AG04450 (cell line): ENCODE measurements at regions of chr12 and their contacts with region 1.

Region 1: DNA sequence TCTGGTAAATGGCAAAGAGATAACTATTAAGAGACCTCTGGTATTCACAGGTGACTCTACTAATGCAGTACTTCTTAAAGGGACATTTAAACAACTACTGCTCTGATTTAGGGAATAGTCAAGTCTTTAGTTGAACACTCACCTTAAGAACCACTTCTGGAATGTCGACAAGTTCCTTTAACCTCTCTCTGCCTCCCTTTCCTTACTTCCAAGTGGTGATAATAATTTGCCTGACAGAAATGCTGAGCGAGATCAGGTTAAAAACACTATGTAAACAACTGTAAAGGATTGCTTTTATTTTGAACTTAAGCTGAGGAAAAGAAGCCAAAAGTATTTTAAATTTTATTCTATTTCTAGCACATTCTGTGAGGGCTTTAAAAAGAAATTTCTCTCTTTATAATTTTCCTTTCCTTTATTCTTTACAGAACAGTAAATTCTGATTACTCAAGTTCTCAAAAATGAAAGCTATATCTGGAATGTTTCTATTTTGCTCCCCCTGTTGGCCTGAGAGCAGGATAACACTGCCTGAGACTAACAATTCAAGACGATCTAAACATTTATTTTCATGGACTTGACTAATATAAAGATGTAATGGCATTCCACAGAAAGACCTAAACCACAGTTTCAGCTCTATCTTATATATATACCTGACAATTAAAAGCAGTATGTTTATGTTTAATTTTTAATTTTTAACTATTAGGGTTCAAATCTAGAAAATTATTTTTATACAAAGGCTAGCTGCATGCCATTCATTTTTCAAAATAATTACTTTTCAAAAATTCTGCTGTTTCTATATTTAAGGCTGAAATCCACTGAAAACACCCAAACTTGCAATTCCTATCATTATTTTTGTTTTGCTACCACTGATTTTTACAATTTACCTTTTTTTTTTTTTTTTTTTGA is 29.2 kb downstream of the ZCCHC8 start:
- DNase-seq: peak; percentile 59
- H3K4me3 ChIP-seq: no peak overlapping the region
- H3K27ac ChIP-seq: no peak overlapping the region
- H3K27me3 ChIP-seq: no peaks in the 10 kb centered on the region
- CTCF ChIP-seq: peak; percentile 78

Region 2: GRCh38 chr12:121933522-121934308 is 537.9 kb before region 1 on chr12:
- CTCF ChIA-PET with region 1: no interaction called
- POLR2A ChIA-PET with region 1: no interaction called
- DNase-seq: no peak
- H3K4me3 ChIP-seq: no peak overlapping the region
- H3K27ac ChIP-seq: no peak overlapping the region
- H3K27me3 ChIP-seq: no peaks in the 10 kb centered on the region
- CTCF ChIP-seq: 0 out of 2 replicates have a peak, but pooled peaks have one; percentile 17

Region 3: GRCh38 chr12:122356192-122356635 is 115.4 kb before region 1 on chr12:
- CTCF ChIA-PET with region 1: interaction called, 13 read pairs
- POLR2A ChIA-PET with region 1: no interaction called
- DNase-seq: peak; percentile 37
- H3K4me3 ChIP-seq: no peak overlapping the region
- H3K27ac ChIP-seq: no peak overlapping the region
- H3K27me3 ChIP-seq: no peaks in the 10 kb centered on the region
- CTCF ChIP-seq: peak; percentile 78

Region 4: GRCh38 chr12:122406701-122407164 is 64.8 kb before region 1 on chr12:
- CTCF ChIA-PET with region 1: interaction called, 16 read pairs
- POLR2A ChIA-PET with region 1: no interaction called
- DNase-seq: no peak
- H3K4me3 ChIP-seq: no peak overlapping the region
- H3K27ac ChIP-seq: no peak overlapping the region
- H3K27me3 ChIP-seq: no peaks in the 10 kb centered on the region
- CTCF ChIP-seq: no peak

Region 5: GRCh38 chr12:122427412-122427811 is 44.2 kb before region 1 on chr12:
- CTCF ChIA-PET with region 1: interaction called, 12 read pairs
- POLR2A ChIA-PET with region 1: interaction called, 3 read pairs
- DNase-seq: no peak
- H3K4me3 ChIP-seq: no peak overlapping the region
- H3K27ac ChIP-seq: no peak overlapping the region
- H3K27me3 ChIP-seq: no peaks in the 10 kb centered on the region
- CTCF ChIP-seq: no peak

Region 6: GRCh38 chr12:122481861-122482260 is 10.3 kb after region 1 on chr12:
- CTCF ChIA-PET with region 1: interaction called, 11 read pairs
- POLR2A ChIA-PET with region 1: no interaction called
- DNase-seq: no peak
- H3K4me3 ChIP-seq: no peak overlapping the region
- H3K27ac ChIP-seq: no peak overlapping the region
- H3K27me3 ChIP-seq: no peaks in the 10 kb centered on the region
- CTCF ChIP-seq: no peak

Region 7: DNA sequence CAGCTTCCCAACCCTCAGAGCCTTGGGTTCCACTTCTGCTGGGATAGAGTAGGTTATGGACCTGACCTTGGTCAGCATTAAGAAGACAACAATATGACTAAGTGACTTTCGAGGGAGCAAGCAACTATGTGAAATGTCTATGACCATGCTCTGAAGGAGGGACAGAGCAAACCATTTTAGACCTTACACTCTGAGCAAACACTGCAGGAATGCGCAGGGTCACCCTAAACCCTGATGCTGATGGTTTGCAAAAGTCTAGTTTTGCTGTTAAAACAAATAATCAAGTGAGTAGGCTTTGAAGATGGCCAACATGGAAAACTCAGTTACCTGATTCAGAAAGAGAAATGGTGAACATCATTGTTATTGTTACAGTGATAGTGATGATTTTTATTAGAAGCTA is 20.4 kb after region 1 on chr12:
- CTCF ChIA-PET with region 1: interaction called, 13 read pairs
- POLR2A ChIA-PET with region 1: no interaction called
- DNase-seq: no peak
- H3K4me3 ChIP-seq: no peak overlapping the region
- H3K27ac ChIP-seq: peak overlapping the region; percentile 47
- H3K27me3 ChIP-seq: no peaks in the 10 kb centered on the region
- CTCF ChIP-seq: no peak

Region 8: DNA sequence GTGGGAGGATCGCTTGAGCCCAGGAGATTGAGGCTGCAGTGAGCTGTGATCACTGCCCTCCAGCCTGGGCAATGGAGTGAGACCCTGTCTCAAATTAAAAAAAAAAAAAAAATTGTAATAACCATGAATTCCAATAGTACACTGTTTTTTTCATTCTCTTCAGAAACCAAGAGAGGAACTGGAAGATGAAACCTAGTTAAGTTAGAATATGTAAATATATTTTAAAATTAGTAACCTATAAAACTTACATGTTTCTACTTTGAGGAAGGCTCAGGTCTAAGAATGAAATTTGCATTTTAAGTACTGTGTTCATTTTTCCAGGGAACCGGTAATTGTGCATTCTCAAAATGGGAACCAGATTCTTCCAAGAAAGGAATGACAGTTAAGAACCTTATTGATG is 74.3 kb after region 1 on chr12:
- CTCF ChIA-PET with region 1: no interaction called
- POLR2A ChIA-PET with region 1: interaction called, 12 read pairs
- DNase-seq: no peak
- H3K4me3 ChIP-seq: no peak overlapping the region
- H3K27ac ChIP-seq: no peak overlapping the region
- H3K27me3 ChIP-seq: no peaks in the 10 kb centered on the region
- CTCF ChIP-seq: no peak

Region 9: DNA sequence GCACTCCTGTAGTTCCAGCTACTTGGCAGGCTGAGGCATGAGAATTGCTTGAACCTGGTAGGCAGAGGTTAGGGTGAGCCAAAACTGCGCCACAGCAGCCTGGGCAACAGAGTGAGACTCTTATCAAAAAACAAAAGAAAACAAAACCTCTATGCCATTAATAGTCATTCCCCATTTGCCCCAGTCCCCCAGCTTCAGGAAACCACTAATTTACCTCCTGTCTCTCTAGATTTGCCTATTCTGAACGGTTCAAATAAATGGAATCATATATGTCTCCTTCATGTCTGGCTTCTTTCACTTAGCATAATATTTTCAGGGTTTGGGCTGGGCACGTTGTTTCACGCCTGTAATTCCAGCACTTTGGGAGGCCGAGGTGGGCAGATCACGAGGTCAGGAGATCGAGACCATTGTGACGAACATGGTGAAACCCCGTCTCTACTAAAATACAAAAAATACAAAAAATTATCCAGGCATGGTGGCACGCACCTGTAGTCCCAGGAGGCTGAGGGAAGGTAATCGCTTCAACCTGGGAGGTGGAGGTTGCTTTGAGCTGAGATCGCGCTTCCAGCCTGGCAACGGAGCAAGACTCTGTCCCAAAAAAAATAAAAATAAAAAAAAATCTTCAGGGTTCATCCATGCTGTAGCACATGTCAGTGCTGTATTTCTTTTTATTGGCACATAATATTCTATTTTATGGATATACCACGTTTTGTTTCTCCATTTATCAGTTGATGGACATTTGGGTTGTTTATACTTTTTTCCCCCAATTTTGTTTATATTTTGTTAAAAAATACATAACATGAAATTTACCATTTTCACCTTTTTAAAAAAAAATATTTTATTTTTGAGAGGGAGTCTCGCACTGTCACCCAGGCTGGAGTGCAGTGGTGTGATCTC is 87.4 kb after region 1 on chr12:
- CTCF ChIA-PET with region 1: no interaction called
- POLR2A ChIA-PET with region 1: no interaction called
- DNase-seq: no peak
- H3K4me3 ChIP-seq: no peak overlapping the region
- H3K27ac ChIP-seq: no peak overlapping the region
- H3K27me3 ChIP-seq: no peaks in the 10 kb centered on the region
- CTCF ChIP-seq: no peak

Region 10: DNA sequence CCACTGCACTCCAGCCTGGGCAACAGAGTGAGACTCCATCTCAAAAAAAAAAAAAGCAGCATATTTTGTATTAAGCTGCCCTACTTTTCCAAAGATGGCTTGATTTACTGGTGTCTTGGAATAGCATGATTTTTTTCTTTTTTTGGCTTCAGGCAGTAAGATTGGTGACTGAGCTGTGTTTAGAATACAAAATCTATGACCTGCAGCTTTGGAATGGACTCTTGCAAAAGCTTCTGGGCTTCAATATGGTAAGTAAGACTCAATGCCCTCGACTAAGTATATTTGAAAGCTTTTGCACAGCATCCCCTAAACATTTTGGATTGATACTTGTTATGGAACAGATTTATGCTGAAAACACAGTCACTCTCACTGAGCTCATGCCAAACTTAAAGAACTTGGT is 143.3 kb after region 1 on chr12:
- CTCF ChIA-PET with region 1: no interaction called
- POLR2A ChIA-PET with region 1: no interaction called
- DNase-seq: peak; percentile 1
- H3K4me3 ChIP-seq: no peak overlapping the region
- H3K27ac ChIP-seq: no peak overlapping the region
- H3K27me3 ChIP-seq: no peaks in the 10 kb centered on the region
- CTCF ChIP-seq: no peak